ENCODE measurements at regions of chr11 and their contacts with region 1.

Region 1: GRCh38 chr11:36400766-36401455 is 104.8 kb downstream of the PRR5L start:
- DNase-seq: no peak
- H3K4me3 ChIP-seq: no peak overlapping the region
- H3K27ac ChIP-seq: no peak overlapping the region
- H3K4me1 ChIP-seq: no peaks in the 10 kb centered on the region
- H3K27me3 ChIP-seq: no peaks in the 10 kb centered on the region
- CTCF ChIP-seq: no peak

Region 2: DNA sequence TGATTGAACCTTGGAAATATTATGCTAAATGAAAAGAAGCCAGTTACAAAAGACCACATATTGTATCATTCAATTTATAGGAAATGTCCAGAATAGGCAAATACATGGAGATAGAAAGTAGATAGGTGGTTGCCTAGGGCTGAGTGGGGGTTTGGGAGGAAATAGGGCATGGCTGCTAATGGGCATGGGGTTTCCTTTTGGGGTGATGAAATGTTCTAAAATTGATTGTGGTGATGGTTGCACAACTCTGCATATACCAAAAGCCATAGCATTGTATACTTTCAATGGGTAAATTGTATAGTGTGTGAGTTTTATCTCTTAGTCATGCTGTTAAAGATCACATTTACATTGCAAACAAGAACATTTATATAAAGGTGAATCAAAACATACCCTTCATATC is 408.4 kb before region 1 on chr11:
- CTCF ChIA-PET with region 1: no interaction called
- POLR2A ChIA-PET with region 1: no interaction called
- intact Hi-C with region 1: no loop called
- DNase-seq: no peak
- H3K4me3 ChIP-seq: no peak overlapping the region
- H3K27ac ChIP-seq: no peak overlapping the region
- H3K4me1 ChIP-seq: no peaks in the 10 kb centered on the region
- H3K27me3 ChIP-seq: no peaks in the 10 kb centered on the region
- CTCF ChIP-seq: no peak

Region 3: GRCh38 chr11:36450110-36450572 is 49.2 kb after region 1 on chr11:
- CTCF ChIA-PET with region 1: no interaction called
- POLR2A ChIA-PET with region 1: no interaction called
- intact Hi-C with region 1: loop called (anchors 5 kb)
- DNase-seq: no peak
- H3K4me3 ChIP-seq: no peak overlapping the region
- H3K27ac ChIP-seq: no peak overlapping the region
- H3K4me1 ChIP-seq: peaks cover 13% of the 10 kb centered on the region
- H3K27me3 ChIP-seq: no peaks in the 10 kb centered on the region
- CTCF ChIP-seq: no peak

Region 4: DNA sequence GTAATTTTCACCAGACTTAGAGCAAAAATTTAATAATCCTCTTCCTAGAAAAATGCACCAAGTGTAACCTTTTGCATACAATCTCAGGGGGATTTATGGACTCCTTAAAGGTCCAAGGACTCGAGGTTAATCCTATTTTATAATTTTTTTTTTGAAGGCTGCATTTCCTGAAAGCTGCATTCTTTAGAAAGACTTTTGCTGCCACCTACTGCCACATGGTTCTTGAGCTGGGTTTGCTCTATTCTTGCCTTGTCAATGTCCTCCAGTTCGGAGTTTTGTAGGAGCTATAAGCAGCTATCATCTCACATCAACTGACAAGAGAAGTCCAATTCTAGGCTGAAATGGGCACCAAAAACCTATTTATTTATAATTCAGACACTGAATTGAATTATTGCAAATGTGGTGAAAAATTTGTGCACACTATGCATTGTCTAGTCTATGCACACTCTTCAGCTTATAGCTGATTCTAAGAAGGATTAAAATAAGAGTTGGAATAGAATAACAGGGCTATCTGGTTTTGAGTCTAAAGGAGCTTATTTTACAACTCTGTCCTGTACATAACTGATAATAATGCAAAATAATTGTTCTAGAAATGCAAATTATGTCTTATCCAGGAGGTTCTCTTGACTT is 77.9 kb after region 1 on chr11:
- CTCF ChIA-PET with region 1: no interaction called
- POLR2A ChIA-PET with region 1: no interaction called
- intact Hi-C with region 1: no loop called
- DNase-seq: peak; percentile 93
- H3K4me3 ChIP-seq: no peak overlapping the region
- H3K27ac ChIP-seq: no peak overlapping the region
- H3K4me1 ChIP-seq: peaks cover 14% of the 10 kb centered on the region
- H3K27me3 ChIP-seq: no peaks in the 10 kb centered on the region
- CTCF ChIP-seq: peak; percentile 98

Region 5: GRCh38 chr11:36672813-36673450 is 272.0 kb after region 1 on chr11:
- CTCF ChIA-PET with region 1: no interaction called
- POLR2A ChIA-PET with region 1: no interaction called
- intact Hi-C with region 1: no loop called
- DNase-seq: peak; percentile 83
- H3K4me3 ChIP-seq: no peak overlapping the region
- H3K27ac ChIP-seq: no peak overlapping the region
- H3K4me1 ChIP-seq: no peaks in the 10 kb centered on the region
- H3K27me3 ChIP-seq: no peaks in the 10 kb centered on the region
- CTCF ChIP-seq: peak; percentile 99